Activated naive CD4-positive, alpha-beta T cell treated with anti-CD3 and anti-CD28 coated beads, Interleukin-2, amount 10 ng/mL, durations not matched to agents 7 days and 5 days (primary cell): ENCODE measurements at regions of chr4 and their contacts with region 1.

Region 1: GRCh38 chr4:122716825-122717448 is 15.6 kb upstream of the BBS12 start:
- DNase-seq: peak; percentile 84
- H3K4me3 Mint-ChIP-seq: no peak overlapping the region
- H3K27ac Mint-ChIP-seq: no peak overlapping the region
- H3K4me1 Mint-ChIP-seq: peaks cover 33% of the 10 kb centered on the region
- H3K27me3 Mint-ChIP-seq: peaks cover 8% of the 10 kb centered on the region

Region 2: GRCh38 chr4:122658818-122659295 is 58.1 kb before region 1 on chr4:
- CTCF ChIA-PET with region 1: interaction called, 23 read pairs
- DNase-seq: no peak
- H3K4me3 Mint-ChIP-seq: no peak overlapping the region
- H3K27ac Mint-ChIP-seq: peak overlapping the region; percentile 90
- H3K4me1 Mint-ChIP-seq: peaks cover 42% of the 10 kb centered on the region
- H3K27me3 Mint-ChIP-seq: no peaks in the 10 kb centered on the region

Region 3: DNA sequence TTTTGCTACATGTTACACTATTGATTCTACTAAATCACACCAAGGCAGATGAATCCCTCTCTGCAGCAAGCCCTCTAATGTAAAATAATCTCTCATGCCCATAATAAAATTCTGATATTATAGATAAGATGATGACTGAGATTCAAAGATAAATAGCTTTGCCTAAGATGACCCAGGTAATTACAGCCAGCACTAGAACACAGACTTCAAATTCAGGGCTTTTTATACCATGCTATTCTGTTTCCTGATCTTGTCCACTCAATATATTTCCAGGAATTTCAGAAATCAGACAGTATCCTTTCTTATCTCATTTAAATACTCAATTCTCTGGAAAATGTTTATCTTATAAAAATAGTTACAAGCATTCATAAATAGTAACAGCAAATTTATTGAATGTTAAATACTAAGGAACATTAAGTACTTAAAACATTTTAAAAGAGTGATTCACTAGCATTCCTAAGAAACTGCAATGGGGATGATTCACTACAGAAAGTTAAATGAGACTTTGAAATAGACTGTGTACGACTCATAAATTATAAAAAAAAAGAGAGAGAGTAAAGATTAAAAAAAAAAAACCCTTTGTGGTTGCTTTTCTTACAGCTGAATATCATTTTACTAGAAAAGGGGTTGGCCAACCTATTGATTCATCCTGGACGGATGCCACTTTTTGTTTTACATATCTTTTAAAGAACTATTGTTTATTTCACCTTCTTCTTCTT is 50.3 kb before region 1 on chr4:
- CTCF ChIA-PET with region 1: interaction called, 23 read pairs
- DNase-seq: no peak
- H3K4me3 Mint-ChIP-seq: no peak overlapping the region
- H3K27ac Mint-ChIP-seq: peak overlapping the region; percentile 56
- H3K4me1 Mint-ChIP-seq: peaks cover 66% of the 10 kb centered on the region
- H3K27me3 Mint-ChIP-seq: no peaks in the 10 kb centered on the region

Region 4: DNA sequence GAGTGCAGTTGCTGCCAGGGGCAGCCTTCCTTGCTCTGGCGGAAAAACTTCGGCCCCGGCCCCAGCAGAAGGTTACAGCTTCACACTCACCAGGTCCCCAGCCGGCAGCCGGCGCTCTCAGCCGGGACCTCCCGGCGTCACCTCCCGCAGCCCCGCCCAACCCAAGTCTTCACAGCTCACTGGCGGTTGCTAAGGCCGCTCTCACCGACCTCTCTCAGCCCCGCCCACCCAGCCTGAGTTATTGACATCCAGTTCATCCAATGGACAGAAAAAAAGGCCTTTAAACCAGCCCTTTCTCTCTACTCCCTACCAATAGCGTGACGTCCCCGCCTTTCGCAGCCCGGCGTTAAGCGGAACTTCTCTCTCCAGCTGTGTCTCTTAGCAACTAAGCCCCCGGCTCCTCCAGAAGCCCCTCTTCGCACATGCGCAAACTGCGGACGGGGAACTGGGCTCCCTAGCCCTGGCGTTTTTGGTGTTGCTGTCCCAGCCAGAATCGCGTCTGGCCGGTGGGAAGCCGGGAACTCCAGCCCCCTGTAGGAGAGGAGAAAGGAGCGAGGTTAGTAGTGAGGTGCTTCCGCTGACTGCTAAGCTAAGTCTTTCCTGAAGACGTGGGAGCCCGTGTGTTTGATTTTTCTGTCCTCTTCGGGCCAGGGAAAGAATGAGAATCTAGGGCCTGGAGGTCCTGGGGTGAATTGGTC is 15.5 kb after region 1 on chr4 and contains the start of gene BBS12:
- CTCF ChIA-PET with region 1: interaction called, 13 read pairs
- DNase-seq: peak; percentile 99
- H3K4me3 Mint-ChIP-seq: peak within 1 kb of the TSS; percentile 91
- H3K27ac Mint-ChIP-seq: peak within 1 kb of the TSS; percentile 93
- H3K4me1 Mint-ChIP-seq: peaks cover 24% of the 10 kb centered on the region
- H3K27me3 Mint-ChIP-seq: no peaks in the 10 kb centered on the region